Dendritic cell treated with granulocyte-macrophage colony-stimulating factor and Interleukin-4, amounts not matched to agents 40 ng/mL and 50 ng/mL, for 4 days (primary cell): ENCODE measurements at regions of chr1 and their contacts with region 1.

Region 1: DNA sequence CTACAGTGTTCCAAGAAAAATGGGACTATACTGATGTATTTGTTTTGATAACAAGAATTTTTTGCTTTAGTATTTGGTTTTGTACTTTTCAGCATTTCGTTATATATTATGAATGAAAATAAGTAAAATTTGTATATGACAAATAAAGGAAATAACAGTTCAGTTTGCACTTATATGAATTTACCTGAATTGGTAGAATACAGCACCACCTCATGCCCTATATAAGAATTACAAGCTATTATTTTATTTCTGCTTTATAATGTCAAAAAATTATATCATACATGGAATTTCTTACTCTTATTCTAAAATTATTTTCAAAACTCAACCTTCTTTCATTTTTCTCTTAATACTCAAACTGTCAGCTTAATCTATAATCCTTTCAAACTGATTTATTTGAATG is 14.6 kb downstream of the EFCAB7 start:
- H3K4me3 Mint-ChIP-seq: no peak overlapping the region
- H3K27ac Mint-ChIP-seq: no peak overlapping the region
- H3K4me1 Mint-ChIP-seq: no peaks in the 10 kb centered on the region
- H3K27me3 Mint-ChIP-seq: no peaks in the 10 kb centered on the region

Region 2: GRCh38 chr1:62841587-62842169 is 696.3 kb before region 1 on chr1:
- intact Hi-C with region 1: loop called (anchors 10 kb)
- H3K4me3 Mint-ChIP-seq: no peak overlapping the region
- H3K27ac Mint-ChIP-seq: no peak overlapping the region
- H3K4me1 Mint-ChIP-seq: no peaks in the 10 kb centered on the region
- H3K27me3 Mint-ChIP-seq: no peaks in the 10 kb centered on the region

Region 3: GRCh38 chr1:62912028-62912638 is 625.8 kb before region 1 on chr1:
- intact Hi-C with region 1: loop called (anchors 10 kb)
- H3K4me3 Mint-ChIP-seq: no peak overlapping the region
- H3K27ac Mint-ChIP-seq: no peak overlapping the region
- H3K4me1 Mint-ChIP-seq: no peaks in the 10 kb centered on the region
- H3K27me3 Mint-ChIP-seq: peaks cover 8% of the 10 kb centered on the region

Region 4: GRCh38 chr1:63327417-63328139 is 210.4 kb before region 1 on chr1:
- intact Hi-C with region 1: loop called (anchors 5 kb)
- H3K4me3 Mint-ChIP-seq: no peak overlapping the region
- H3K27ac Mint-ChIP-seq: no peak overlapping the region
- H3K4me1 Mint-ChIP-seq: peaks cover 40% of the 10 kb centered on the region
- H3K27me3 Mint-ChIP-seq: peaks cover 80% of the 10 kb centered on the region

Region 5: DNA sequence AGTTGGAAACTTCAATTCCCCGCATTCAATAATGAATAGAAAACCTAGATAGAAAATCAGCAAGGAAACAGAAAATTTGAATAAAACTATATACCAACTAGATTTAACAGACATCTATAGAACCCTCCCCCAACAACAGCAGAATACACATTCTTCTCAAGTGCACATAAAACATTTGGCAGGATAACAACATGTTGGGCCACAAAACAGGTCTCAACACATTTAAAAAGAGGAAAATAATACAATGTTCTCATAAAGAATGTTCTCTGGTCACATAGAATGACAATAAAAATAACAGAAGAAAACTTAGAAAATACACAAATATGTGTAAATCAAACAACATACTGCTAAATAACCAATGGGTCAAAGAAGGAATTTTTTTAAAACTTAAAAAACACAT is 39.8 kb before region 1 on chr1:
- intact Hi-C with region 1: no loop called
- H3K4me3 Mint-ChIP-seq: no peak overlapping the region
- H3K27ac Mint-ChIP-seq: no peak overlapping the region
- H3K4me1 Mint-ChIP-seq: peaks cover 5% of the 10 kb centered on the region
- H3K27me3 Mint-ChIP-seq: no peaks in the 10 kb centered on the region